ENCODE measurements at regions of chr18 and their contacts with region 1.

Region 1: DNA sequence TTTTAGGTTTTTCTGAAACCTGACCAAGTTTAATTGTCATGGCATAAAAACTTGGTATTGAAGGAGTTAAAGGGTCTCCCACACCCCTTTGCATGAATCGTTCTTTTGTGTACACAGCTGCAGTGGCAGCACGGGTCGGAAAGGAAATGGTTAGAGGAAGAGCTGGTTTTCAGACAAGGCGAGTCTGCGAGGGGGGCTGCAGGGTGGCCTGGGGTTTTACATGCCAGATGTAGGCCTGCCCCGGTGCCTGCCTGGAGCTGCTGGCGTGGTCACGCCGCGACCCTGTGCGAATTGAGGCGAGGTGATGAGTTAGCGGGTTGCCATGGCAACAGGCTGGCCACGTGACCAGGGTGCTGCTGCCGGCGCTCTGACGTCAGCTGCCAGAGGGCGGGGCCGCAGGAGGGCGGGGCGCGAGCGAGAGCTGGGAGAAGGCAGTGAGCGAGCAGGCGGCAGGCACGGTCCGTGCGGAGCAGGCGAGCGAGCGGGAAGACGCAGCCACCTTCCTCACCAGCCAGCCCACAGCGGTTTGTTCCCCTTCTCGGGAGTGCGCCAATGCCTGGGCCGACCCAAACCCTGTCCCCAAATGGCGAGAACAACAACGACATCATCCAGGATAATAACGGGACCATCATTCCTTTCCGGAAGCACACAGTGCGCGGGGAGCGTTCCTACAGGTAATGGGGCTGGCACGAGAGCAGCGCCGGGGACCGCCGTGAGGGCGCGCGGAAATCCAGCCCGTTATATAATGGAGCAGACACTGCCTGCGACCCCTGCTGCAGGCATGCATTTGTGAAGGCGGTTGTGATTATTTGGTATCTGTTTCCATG is at the start of gene MAPRE2:
- DNase-seq: peak; percentile 99
- H3K4me3 ChIP-seq: peak within 1 kb of the TSS; percentile 62 to 89 (median 82)
- H3K27ac ChIP-seq: peak within 1 kb of the TSS; percentile 80 to 89 (median 85)
- H3K4me1 ChIP-seq: peaks cover 0 to 40% (median 31%) of the 10 kb centered on the region in 4 donors
- H3K27me3 ChIP-seq: no peaks in the 10 kb centered on the region
- CTCF ChIP-seq: no peak
- EP300 ChIP-seq: peak in 1 of 4 donors; percentile 88
- POLR2A ChIP-seq: peak; percentile 79 to 92
- total RNA-seq, gene MAPRE2: 14.0 to 31.6 (median 27.9) TPM

Region 2: GRCh38 chr18:34976899-34977837 is 64.0 kb before region 1 on chr18:
- intact Hi-C with region 1: loop called (anchors 5 kb)
- DNase-seq: peak; percentile 86
- H3K4me3 ChIP-seq: peak overlapping the region; percentile 55 to 83 (median 71)
- H3K27ac ChIP-seq: peak overlapping the region; percentile 16 to 79 (median 74)
- H3K4me1 ChIP-seq: peaks cover 0 to 23% (median 15%) of the 10 kb centered on the region in 4 donors
- H3K27me3 ChIP-seq: no peaks in the 10 kb centered on the region
- CTCF ChIP-seq: no peak
- EP300 ChIP-seq: no peak
- POLR2A ChIP-seq: peak in 1 of 2 donors; percentile 23

Region 3: DNA sequence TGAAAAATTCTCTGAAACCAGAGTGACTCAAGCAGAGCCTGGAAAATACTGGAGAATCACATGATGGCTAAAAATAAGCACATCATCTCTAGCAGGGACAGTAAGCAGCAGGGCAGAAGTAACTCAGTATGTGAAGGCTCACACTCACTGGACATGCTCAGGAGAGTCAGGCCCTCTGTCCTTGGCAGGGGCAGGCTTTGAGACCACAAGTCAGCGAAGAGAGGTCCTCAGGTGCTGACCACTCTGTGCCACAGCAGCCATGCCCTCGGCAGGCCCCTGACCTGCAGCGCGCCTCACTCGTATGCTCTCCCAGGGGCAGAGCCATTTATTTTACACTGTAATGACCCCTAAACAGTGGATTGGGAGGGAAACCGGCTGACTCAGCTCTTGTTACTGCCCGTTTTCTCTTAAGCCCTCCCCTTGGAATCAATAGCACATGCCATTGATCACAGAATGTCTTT is 76.8 kb after region 1 on chr18:
- intact Hi-C with region 1: loop called (anchors 5 kb)
- DNase-seq: peak; percentile 71
- H3K4me3 ChIP-seq: peak overlapping the region in 3 of 4 donors; percentile 8 to 22 (median 16)
- H3K27ac ChIP-seq: peak overlapping the region; percentile 77 to 92 (median 81)
- H3K4me1 ChIP-seq: peaks cover 0 to 50% (median 39%) of the 10 kb centered on the region in 4 donors
- H3K27me3 ChIP-seq: no peaks in the 10 kb centered on the region
- CTCF ChIP-seq: no peak
- EP300 ChIP-seq: peak in 2 of 4 donors; percentile 55 to 78
- POLR2A ChIP-seq: no peak